ENCODE measurements at regions of chr16 and their contacts with region 1.

Region 1: DNA sequence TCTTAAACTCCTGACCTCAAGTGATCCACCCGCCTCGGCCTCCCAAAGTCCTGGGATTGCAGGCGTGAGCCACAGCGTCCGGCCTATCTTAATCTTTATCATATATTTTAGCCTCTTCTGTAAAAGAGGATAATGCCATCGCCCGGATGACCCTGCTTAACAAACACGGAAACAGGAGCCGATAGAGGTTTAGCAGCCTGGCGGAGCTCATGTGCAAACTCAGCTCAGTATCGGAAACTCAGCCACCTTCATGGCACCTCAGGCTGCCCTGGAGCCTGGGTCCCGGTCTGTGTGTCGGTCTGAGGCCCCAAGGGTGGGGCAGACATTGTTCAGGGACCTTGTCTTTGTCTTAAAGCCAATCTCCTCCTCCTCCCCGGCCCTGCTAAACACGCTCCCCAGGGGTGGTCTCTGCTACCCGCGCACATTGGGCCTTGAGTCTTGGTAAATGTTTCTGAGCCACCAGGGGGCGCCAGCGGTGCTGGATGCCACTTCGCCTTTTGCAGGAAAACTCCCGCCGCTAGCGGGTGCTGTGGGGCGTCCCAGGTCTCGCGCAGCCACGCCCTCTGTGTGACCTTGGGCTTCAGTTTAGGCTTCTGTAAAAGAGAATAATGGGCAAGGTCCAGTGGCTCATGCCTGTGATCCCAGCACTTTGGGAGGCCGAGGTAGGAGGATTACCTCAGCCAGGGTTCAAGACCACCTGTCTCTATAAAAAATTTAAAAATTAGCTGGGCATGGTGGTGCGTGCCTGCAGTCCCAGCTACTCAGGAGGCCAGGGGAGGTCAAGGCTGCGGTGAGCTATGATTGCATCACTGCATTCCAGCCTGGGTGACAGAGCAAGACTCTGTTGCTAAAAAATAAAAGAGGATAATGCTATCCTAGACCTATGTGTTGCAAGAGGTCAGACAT is 2.7 kb downstream of the CETP start:
- DNase-seq: peak; percentile 90 to 99 (median 96)
- ATAC-seq: peak; percentile 98
- H3K4me3 ChIP-seq: no peak overlapping the region
- H3K4me3 Mint-ChIP-seq: no peak overlapping the region
- H3K27ac ChIP-seq: no peak overlapping the region
- H3K27ac Mint-ChIP-seq: no peak overlapping the region
- H3K4me1 ChIP-seq: peaks cover 20% of the 10 kb centered on the region
- H3K4me1 Mint-ChIP-seq: peaks cover 19% of the 10 kb centered on the region
- H3K27me3 ChIP-seq: no peaks in the 10 kb centered on the region
- H3K27me3 Mint-ChIP-seq: no peaks in the 10 kb centered on the region
- CTCF ChIP-seq: peak; percentile 99

Region 2: DNA sequence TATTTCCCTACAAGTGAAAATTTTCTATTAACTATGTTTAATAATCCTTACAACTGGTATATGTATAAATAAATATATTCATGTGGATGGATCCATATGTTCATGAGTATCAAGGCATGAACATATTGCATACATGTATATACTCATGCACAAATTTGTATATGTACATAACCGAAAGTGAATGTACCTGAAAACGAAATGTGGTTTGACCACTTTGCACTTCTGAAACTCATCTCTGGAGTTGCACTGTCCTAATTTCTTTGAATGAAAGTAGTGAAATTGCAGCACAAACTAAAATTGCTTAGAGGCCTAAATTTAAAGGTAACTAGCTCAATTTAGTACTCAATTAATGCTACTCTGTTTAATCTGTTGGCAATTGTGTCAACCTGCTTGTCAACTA is 800.6 kb before region 1 on chr16:
- CTCF ChIA-PET with region 1: no interaction called
- POLR2A ChIA-PET with region 1: no interaction called
- intact Hi-C with region 1: no loop called
- DNase-seq: peak in 1 of 14 experiments; percentile 11
- ATAC-seq: no peak
- H3K4me3 ChIP-seq: no peak overlapping the region
- H3K4me3 Mint-ChIP-seq: no peak overlapping the region
- H3K27ac ChIP-seq: no peak overlapping the region
- H3K27ac Mint-ChIP-seq: no peak overlapping the region
- H3K4me1 ChIP-seq: no peaks in the 10 kb centered on the region
- H3K4me1 Mint-ChIP-seq: no peaks in the 10 kb centered on the region
- H3K27me3 ChIP-seq: no peaks in the 10 kb centered on the region
- H3K27me3 Mint-ChIP-seq: no peaks in the 10 kb centered on the region
- CTCF ChIP-seq: no peak

Region 3: GRCh38 chr16:57013229-57013628 is 48.7 kb after region 1 on chr16:
- CTCF ChIA-PET with region 1: interaction called, 4 read pairs
- POLR2A ChIA-PET with region 1: no interaction called
- intact Hi-C with region 1: loop called in 1 of 2 experiments (anchors 1 kb)
- DNase-seq: peak in 2 of 14 experiments; percentile 9 to 34
- ATAC-seq: no peak
- H3K4me3 ChIP-seq: no peak overlapping the region
- H3K4me3 Mint-ChIP-seq: peak overlapping the region; percentile 71
- H3K27ac ChIP-seq: peak overlapping the region; percentile 43 to 86
- H3K27ac Mint-ChIP-seq: peak overlapping the region; percentile 91
- H3K4me1 ChIP-seq: peaks cover 78% of the 10 kb centered on the region
- H3K4me1 Mint-ChIP-seq: peaks cover 78% of the 10 kb centered on the region
- H3K27me3 ChIP-seq: no peaks in the 10 kb centered on the region
- H3K27me3 Mint-ChIP-seq: no peaks in the 10 kb centered on the region
- CTCF ChIP-seq: no peak

Region 4: GRCh38 chr16:57039148-57039812 is 74.8 kb after region 1 on chr16:
- CTCF ChIA-PET with region 1: interaction called, 7 read pairs
- POLR2A ChIA-PET with region 1: interaction called, 6 read pairs
- intact Hi-C with region 1: loop called in 1 of 2 experiments (anchors 1 kb)
- DNase-seq: peak in 5 of 14 experiments; percentile 11 to 68 (median 41)
- ATAC-seq: peak; percentile 7
- H3K4me3 ChIP-seq: no peak overlapping the region
- H3K4me3 Mint-ChIP-seq: peak overlapping the region; percentile 79
- H3K27ac ChIP-seq: peak overlapping the region; percentile 81 to 88
- H3K27ac Mint-ChIP-seq: peak overlapping the region; percentile 94
- H3K4me1 ChIP-seq: peaks cover 98% of the 10 kb centered on the region
- H3K4me1 Mint-ChIP-seq: peaks cover 91% of the 10 kb centered on the region
- H3K27me3 ChIP-seq: no peaks in the 10 kb centered on the region
- H3K27me3 Mint-ChIP-seq: no peaks in the 10 kb centered on the region
- CTCF ChIP-seq: no peak

Region 5: GRCh38 chr16:57084257-57084770 is 119.8 kb after region 1 on chr16:
- CTCF ChIA-PET with region 1: interaction called, 16 read pairs
- POLR2A ChIA-PET with region 1: no interaction called
- intact Hi-C with region 1: no loop called
- DNase-seq: peak; percentile 56 to 90 (median 70)
- ATAC-seq: peak; percentile 96
- H3K4me3 ChIP-seq: no peak overlapping the region
- H3K4me3 Mint-ChIP-seq: no peak overlapping the region
- H3K27ac ChIP-seq: peak overlapping the region; percentile 43 to 57
- H3K27ac Mint-ChIP-seq: peak overlapping the region; percentile 84
- H3K4me1 ChIP-seq: peaks cover 11% of the 10 kb centered on the region
- H3K4me1 Mint-ChIP-seq: peaks cover 12% of the 10 kb centered on the region
- H3K27me3 ChIP-seq: no peaks in the 10 kb centered on the region
- H3K27me3 Mint-ChIP-seq: no peaks in the 10 kb centered on the region
- CTCF ChIP-seq: peak; percentile 92

Measured in CD4-positive, alpha-beta T cell (primary cell).